ENCODE measurements at regions of chr4 and their contacts with region 1.

Region 1: GRCh38 chr4:32249040-32249439 is 1528.9 kb downstream of the PCDH7 start:
- DNase-seq: no peak
- ATAC-seq: no peak
- H3K4me3 ChIP-seq: no peak overlapping the region
- H3K27ac ChIP-seq: no peak overlapping the region
- H3K4me1 ChIP-seq: no peaks in the 10 kb centered on the region
- H3K27me3 ChIP-seq: no peaks in the 10 kb centered on the region
- CTCF ChIP-seq: no peak
- POLR2A ChIP-seq: no peak
- RAD21 ChIP-seq: no peak

Region 2: GRCh38 chr4:32215277-32215676 is 33.8 kb before region 1 on chr4:
- CTCF ChIA-PET with region 1: no interaction called
- POLR2A ChIA-PET with region 1: no interaction called
- dilution Hi-C with region 1: no loop called
- in situ Hi-C with region 1: no loop called
- intact Hi-C with region 1: loop called (anchors 1 kb)
- DNase-seq: no peak
- ATAC-seq: no peak
- H3K4me3 ChIP-seq: no peak overlapping the region
- H3K27ac ChIP-seq: no peak overlapping the region
- H3K4me1 ChIP-seq: no peaks in the 10 kb centered on the region
- H3K27me3 ChIP-seq: no peaks in the 10 kb centered on the region
- CTCF ChIP-seq: no peak
- POLR2A ChIP-seq: no peak
- RAD21 ChIP-seq: no peak

Measured in IMR-90 (cell line).